ENCODE measurements at regions of chr15 and their contacts with region 1.

Region 1: GRCh38 chr15:73786518-73786917 is 33.4 kb upstream of the INSYN1 start:
- DNase-seq: no peak

Region 2: GRCh38 chr15:73746883-73747282 is 39.6 kb before region 1 on chr15:
- intact Hi-C with region 1: loop called (anchors 5 kb)
- DNase-seq: no peak